ENCODE measurements at regions of chr1 and their contacts with region 1.

Region 1: DNA sequence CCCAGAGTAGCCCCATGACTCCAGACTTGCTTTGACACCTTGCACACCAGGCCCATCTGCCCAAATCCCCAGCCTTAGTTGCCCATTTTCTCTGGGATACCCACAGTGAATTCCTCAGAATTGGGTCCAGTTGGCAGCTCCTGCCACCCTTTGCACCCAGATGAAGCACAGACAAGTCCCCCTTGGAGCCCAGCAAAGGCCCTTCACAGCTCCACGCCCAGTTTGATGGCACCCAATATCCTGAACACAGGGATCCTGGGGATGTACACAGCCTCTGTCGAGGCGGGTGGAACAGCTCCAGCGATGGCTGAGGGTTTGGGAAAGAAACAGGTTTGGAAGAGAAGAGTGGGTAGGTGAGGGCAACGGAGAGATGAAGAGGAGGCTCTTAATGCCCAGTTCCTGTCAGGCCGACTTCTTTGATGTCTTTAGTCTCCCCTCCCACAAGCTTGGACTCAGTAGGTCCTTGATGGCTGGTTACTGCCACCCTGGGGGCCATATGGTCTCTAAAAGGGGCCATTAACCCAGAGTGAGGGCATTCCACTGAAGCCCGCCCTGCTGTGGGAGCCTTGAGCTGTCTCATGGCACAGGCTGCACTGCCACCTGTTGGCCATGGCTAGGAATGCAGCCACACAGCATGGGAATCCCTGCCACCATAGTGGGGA is 21.7 kb downstream of the TMEM53 start:
- DNase-seq: peak; percentile 83
- H3K4me3 Mint-ChIP-seq: no peak overlapping the region
- H3K27ac Mint-ChIP-seq: no peak overlapping the region
- H3K4me1 Mint-ChIP-seq: no peaks in the 10 kb centered on the region
- H3K27me3 Mint-ChIP-seq: no peaks in the 10 kb centered on the region

Region 2: DNA sequence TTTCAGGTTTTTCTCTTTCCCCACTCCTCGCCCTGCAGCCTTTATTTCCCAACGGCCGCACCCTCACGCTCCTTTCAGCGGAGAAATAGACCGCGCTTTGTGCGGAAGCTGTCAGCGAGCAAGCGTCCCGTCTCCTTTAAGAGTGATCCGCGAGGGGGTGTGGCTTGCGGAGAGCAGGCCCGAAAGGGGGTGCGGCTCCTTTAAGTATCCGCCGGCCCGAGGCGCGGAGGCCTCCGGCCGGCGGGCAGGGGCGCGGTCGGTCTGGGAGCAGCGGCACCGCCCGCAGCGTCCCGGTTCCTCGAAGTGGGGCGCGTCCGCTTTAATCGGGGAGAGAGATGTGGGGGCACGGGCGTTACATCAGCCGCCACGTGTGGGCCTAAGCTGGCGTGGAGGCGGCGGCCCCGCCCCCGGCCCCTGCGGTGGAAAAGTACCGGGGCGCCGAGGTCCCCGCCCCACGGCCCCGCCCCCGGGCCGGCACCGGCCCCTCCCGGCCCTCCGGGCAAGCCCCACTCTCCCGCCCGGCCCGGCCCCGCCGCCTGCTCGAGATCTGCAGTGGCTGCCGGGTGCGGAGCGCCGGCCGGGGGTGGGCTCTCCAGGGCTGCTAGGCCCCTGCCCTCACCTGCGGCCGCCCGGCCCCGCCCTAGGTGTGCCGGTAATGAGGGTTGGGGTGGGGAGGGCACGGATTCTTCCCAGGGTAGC is 622.5 kb before region 1 on chr1:
- CTCF ChIA-PET with region 1: no interaction called
- POLR2A ChIA-PET with region 1: no interaction called
- intact Hi-C with region 1: no loop called
- DNase-seq: peak; percentile 92
- H3K4me3 Mint-ChIP-seq: peak overlapping the region; percentile 94
- H3K27ac Mint-ChIP-seq: peak overlapping the region; percentile 95
- H3K4me1 Mint-ChIP-seq: peaks cover 13% of the 10 kb centered on the region
- H3K27me3 Mint-ChIP-seq: no peaks in the 10 kb centered on the region

Region 3: DNA sequence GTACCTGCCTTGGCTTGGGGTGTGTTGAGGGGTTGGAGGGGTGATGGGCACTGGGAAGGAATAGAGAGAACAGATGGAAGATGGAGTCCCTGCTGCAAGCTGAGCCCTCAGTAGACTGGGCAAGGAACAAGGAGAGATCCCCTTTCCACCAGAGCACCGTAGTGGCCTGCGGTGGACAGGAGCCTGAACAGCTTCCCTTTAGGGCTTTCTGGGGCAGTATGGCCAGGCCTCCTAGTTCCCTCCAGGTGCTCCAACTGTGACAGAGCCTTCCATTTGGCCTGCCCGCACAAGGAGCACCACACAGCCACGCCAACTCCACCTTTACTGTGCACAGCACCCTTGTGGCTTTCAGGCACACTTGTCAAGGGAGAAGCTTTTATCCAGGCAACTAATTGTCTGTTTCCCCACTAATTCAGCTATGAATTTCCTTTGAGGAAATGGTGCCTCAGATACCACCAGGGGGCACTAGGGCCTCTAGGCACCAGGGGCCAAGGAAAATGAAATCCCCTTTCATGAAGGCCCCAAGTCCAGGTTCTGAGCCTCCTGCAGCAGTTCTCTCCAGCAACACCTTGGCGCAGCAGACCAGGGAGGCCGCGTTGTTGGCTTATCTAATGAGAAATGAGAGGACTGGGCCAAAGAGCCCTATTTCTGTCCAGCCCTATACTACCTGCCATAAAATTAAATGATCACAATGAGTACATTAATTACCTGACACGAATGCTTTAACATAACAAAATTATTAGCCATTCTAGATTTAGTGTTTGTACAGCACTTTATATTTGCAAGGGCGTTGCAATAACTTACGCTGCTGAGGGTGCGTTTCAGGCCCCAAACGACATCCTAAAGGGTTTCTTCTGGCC is 274.4 kb before region 1 on chr1:
- CTCF ChIA-PET with region 1: interaction called, 29 read pairs
- POLR2A ChIA-PET with region 1: no interaction called
- intact Hi-C with region 1: loop called (anchors 5 kb)
- DNase-seq: peak; percentile 60
- H3K4me3 Mint-ChIP-seq: no peak overlapping the region
- H3K27ac Mint-ChIP-seq: no peak overlapping the region
- H3K4me1 Mint-ChIP-seq: no peaks in the 10 kb centered on the region
- H3K27me3 Mint-ChIP-seq: no peaks in the 10 kb centered on the region

Region 4: GRCh38 chr1:44594871-44595746 is 57.5 kb before region 1 on chr1:
- CTCF ChIA-PET with region 1: interaction called, 23 read pairs
- POLR2A ChIA-PET with region 1: no interaction called
- intact Hi-C with region 1: no loop called
- DNase-seq: peak; percentile 87
- H3K4me3 Mint-ChIP-seq: no peak overlapping the region
- H3K27ac Mint-ChIP-seq: no peak overlapping the region
- H3K4me1 Mint-ChIP-seq: no peaks in the 10 kb centered on the region
- H3K27me3 Mint-ChIP-seq: peaks cover 5% of the 10 kb centered on the region

Region 5: GRCh38 chr1:44631647-44632539 is 20.7 kb before region 1 on chr1:
- CTCF ChIA-PET with region 1: interaction called, 65 read pairs
- POLR2A ChIA-PET with region 1: interaction called, 28 read pairs
- intact Hi-C with region 1: no loop called
- DNase-seq: peak; percentile 94
- H3K4me3 Mint-ChIP-seq: peak overlapping the region; percentile 91
- H3K27ac Mint-ChIP-seq: peak overlapping the region; percentile 94
- H3K4me1 Mint-ChIP-seq: peaks cover 36% of the 10 kb centered on the region
- H3K27me3 Mint-ChIP-seq: no peaks in the 10 kb centered on the region

Region 6: GRCh38 chr1:44664730-44665370 is 12.3 kb after region 1 on chr1:
- CTCF ChIA-PET with region 1: interaction called, 41 read pairs
- POLR2A ChIA-PET with region 1: no interaction called
- intact Hi-C with region 1: no loop called
- DNase-seq: peak; percentile 68
- H3K4me3 Mint-ChIP-seq: peak overlapping the region; percentile 14
- H3K27ac Mint-ChIP-seq: peak overlapping the region; percentile 43
- H3K4me1 Mint-ChIP-seq: peaks cover 17% of the 10 kb centered on the region
- H3K27me3 Mint-ChIP-seq: no peaks in the 10 kb centered on the region

Region 7: GRCh38 chr1:44696789-44697345 is 44.3 kb after region 1 on chr1:
- CTCF ChIA-PET with region 1: interaction called, 21 read pairs
- POLR2A ChIA-PET with region 1: no interaction called
- intact Hi-C with region 1: no loop called
- DNase-seq: peak; percentile 62
- H3K4me3 Mint-ChIP-seq: no peak overlapping the region
- H3K27ac Mint-ChIP-seq: peak overlapping the region; percentile 58
- H3K4me1 Mint-ChIP-seq: peaks cover 18% of the 10 kb centered on the region
- H3K27me3 Mint-ChIP-seq: no peaks in the 10 kb centered on the region

Region 8: GRCh38 chr1:44929531-44929930 is 277.0 kb after region 1 on chr1:
- CTCF ChIA-PET with region 1: no interaction called
- POLR2A ChIA-PET with region 1: no interaction called
- intact Hi-C with region 1: no loop called
- DNase-seq: no peak
- H3K4me3 Mint-ChIP-seq: no peak overlapping the region
- H3K27ac Mint-ChIP-seq: no peak overlapping the region
- H3K4me1 Mint-ChIP-seq: no peaks in the 10 kb centered on the region
- H3K27me3 Mint-ChIP-seq: no peaks in the 10 kb centered on the region